A673 (cell line): ENCODE measurements at regions of chr10 and their contacts with region 1.

Region 1: DNA sequence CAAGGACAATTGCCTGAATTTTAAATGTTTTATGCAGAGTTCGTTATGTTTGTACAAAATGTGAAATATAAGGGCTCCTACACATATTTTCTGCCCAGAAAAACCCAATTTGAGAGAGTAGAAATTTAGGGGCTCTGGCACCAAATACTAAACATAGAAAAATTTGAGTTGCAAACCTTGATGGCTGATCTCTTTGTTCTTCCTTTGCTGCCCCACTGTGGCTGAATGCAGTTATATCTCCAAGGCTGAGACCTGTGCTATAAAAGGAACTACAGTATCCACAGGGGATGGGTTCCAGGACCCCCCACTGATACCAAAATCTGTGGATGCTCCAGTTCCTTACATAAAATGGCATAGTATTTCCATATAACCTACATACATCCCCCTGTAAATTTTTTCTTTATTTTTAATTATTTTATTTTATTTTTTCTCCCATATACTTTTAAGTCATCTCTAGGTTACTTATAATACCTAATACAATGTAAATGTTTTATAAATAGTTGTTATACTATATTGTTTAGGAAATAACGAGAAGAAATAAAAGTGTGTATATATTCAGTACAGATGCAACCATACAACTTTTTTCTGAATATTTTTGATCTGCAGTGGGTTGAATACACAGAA is 22.5 kb downstream of the CFAP43 start:
- DNase-seq: peak; percentile 74
- H3K4me3 ChIP-seq: no peak overlapping the region
- H3K27ac ChIP-seq: no peak overlapping the region
- H3K4me1 ChIP-seq: no peaks in the 10 kb centered on the region
- H3K27me3 ChIP-seq: no peaks in the 10 kb centered on the region
- CTCF ChIP-seq: peak; percentile 66

Region 2: DNA sequence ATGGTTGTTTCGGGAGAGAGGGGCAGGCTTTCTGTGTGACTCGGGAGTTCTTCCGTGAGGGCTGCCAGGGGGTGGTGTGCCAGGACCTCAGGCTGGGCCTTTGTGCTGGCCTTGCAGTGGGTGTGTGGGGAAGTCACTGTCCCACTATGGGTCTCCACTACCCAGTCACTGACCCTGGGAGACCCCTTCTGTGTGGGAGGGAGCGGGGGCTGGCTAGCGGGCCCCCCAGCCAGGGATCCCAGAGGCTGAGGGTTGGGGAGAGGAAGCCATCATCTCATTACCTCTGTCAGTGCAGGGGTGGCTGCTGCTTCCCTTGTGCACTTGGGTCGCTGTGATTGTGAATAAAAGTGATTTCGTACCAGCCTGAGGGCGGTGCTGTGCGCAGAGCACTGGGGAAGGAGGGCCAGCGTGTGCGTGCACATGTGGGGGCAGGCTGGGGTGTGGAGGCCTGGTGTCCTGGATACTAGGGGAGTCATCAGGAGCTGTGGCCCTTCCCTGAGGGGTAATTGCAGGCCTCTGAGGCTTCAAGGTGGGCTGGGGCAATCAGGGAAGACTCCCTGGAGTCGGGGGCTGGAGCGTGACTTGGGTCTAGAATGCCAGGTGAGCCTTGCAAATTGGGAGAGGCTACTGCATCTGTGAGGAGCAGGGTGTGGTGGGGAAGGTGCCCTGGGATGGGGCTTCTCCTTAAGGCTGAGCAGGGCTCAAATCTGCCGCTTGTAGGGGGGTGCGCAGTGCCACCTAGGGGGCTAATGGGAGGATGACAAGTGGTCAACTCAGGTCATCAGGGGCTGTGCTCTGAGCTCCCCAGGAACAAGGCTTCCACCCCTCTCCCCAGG is 617.3 kb before region 1 on chr10:
- CTCF ChIA-PET with region 1: no interaction called
- POLR2A ChIA-PET with region 1: no interaction called
- intact Hi-C with region 1: loop called (anchors 10 kb)
- DNase-seq: peak; percentile 51
- H3K4me3 ChIP-seq: no peak overlapping the region
- H3K27ac ChIP-seq: no peak overlapping the region
- H3K4me1 ChIP-seq: no peaks in the 10 kb centered on the region
- H3K27me3 ChIP-seq: no peaks in the 10 kb centered on the region
- CTCF ChIP-seq: peak; percentile 75

Region 3: GRCh38 chr10:103712570-103713498 is 496.9 kb before region 1 on chr10:
- CTCF ChIA-PET with region 1: no interaction called
- POLR2A ChIA-PET with region 1: no interaction called
- intact Hi-C with region 1: loop called (anchors 5 kb)
- DNase-seq: peak; percentile 84
- H3K4me3 ChIP-seq: no peak overlapping the region
- H3K27ac ChIP-seq: no peak overlapping the region
- H3K4me1 ChIP-seq: peaks cover 11% of the 10 kb centered on the region
- H3K27me3 ChIP-seq: no peaks in the 10 kb centered on the region
- CTCF ChIP-seq: peak; percentile 88

Region 4: GRCh38 chr10:104045151-104046089 is 164.3 kb before region 1 on chr10:
- CTCF ChIA-PET with region 1: no interaction called
- POLR2A ChIA-PET with region 1: no interaction called
- intact Hi-C with region 1: loop called (anchors 10 kb)
- DNase-seq: peak; percentile 31
- H3K4me3 ChIP-seq: no peak overlapping the region
- H3K27ac ChIP-seq: no peak overlapping the region
- H3K4me1 ChIP-seq: no peaks in the 10 kb centered on the region
- H3K27me3 ChIP-seq: no peaks in the 10 kb centered on the region
- CTCF ChIP-seq: peak; percentile 40

Region 5: DNA sequence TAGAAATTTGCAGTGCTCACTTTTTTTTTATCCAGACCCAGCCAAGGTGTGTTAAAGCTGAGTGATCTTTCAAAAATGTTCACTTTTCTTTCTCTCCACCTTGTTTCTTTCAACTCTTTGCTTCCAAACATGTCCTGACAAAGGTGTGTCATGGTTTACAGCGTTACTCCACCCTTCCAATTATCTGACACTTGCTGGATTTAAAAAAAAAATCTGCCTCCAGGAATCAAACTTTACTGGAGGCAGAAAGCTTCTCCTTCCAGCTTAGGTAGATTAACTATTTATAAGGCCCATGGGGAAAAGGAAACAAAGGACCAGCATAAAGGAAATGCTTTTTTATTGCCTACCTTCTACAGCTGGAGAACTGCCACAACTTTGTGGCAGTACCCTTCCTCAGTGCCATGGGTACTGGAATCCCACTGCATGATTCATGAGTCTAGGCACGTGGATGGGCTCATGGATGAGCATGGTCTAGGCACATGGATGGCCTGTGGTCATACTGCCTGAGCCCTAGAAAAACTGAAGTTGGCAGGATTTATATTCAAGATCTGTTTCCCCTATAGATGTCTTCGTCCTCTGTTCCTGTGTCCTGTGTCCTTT is 123.8 kb before region 1 on chr10 and contains the start of gene COL17A1:
- CTCF ChIA-PET with region 1: no interaction called
- POLR2A ChIA-PET with region 1: no interaction called
- intact Hi-C with region 1: no loop called
- DNase-seq: peak; percentile 35
- H3K4me3 ChIP-seq: no peak within 1 kb of the TSS
- H3K27ac ChIP-seq: no peak within 1 kb of the TSS
- H3K4me1 ChIP-seq: no peaks in the 10 kb centered on the region
- H3K27me3 ChIP-seq: no peaks in the 10 kb centered on the region
- CTCF ChIP-seq: no peak
- total RNA-seq, gene COL17A1: not detected in 2 replicates